CD8-positive, alpha-beta memory T cell (primary cell): ENCODE measurements at regions of chr16 and their contacts with region 1.

Region 1: GRCh38 chr16:31700526-31701388 is 172.8 kb upstream of the ZNF267 start:
- DNase-seq: peak; percentile 81 to 90 (median 86)
- H3K4me3 ChIP-seq: peak overlapping the region; percentile 80
- H3K4me3 Mint-ChIP-seq: peak overlapping the region; percentile 84 to 96 (median 95)
- H3K27ac ChIP-seq: peak overlapping the region; percentile 88
- H3K27ac Mint-ChIP-seq: peak overlapping the region; percentile 92 to 99 (median 94)
- H3K4me1 ChIP-seq: peaks cover 27% of the 10 kb centered on the region
- H3K4me1 Mint-ChIP-seq: peaks cover 23 to 43% (median 33%) of the 10 kb centered on the region in 3 donors
- H3K27me3 ChIP-seq: no peaks in the 10 kb centered on the region
- H3K27me3 Mint-ChIP-seq: no peaks in the 10 kb centered on the region

Region 2: DNA sequence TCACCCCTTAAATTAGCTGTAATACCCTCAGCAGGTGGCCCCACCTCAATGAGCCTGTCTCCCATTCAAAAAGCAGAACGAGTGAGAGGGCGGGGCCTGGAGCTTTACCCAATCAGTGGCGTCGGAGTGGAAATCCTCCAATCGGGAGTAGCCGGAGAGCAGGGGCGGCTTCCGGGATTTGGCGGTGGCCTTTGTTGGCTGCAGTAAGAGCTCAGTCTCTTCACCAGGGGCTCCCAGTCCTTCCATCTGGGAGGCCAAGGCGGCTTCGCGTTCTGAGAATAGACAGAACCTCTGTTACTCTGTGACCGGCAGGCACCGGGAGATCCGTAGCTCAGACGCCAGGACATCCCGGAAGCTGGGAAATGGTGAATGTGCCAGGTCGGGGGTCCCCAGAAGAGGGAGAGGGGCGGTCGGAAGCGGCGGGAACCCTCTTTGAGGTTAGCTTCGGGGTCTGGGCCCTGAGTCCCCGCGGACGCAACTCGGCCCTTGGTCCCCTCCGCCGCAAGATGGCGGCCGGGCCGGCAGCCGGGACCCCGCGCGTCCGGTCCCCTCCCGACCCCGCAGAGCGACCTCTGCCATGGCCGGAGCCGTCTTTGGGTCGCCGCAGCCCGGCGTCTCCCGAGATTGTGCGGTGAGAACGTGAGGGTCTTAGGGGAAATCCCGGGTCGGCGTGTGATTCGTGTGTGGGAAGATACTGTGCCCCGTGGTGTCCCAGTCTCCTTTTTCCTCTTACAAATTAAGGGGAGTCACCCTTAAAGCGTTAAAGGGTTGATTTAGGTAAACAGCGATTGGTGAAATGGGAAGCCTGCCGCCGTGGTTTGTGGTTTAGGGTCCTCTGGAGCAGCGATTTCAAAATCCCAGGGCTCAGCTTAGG is 12.6 kb after region 1 on chr16:
- CTCF ChIA-PET with region 1: interaction called, 10 read pairs
- POLR2A ChIA-PET with region 1: interaction called, 20 read pairs
- DNase-seq: peak; percentile 84 to 93 (median 87)
- H3K4me3 ChIP-seq: peak overlapping the region; percentile 97
- H3K4me3 Mint-ChIP-seq: peak overlapping the region; percentile 98 to 100 (median 100)
- H3K27ac ChIP-seq: peak overlapping the region; percentile 91
- H3K27ac Mint-ChIP-seq: peak overlapping the region; percentile 96 to 100 (median 99)
- H3K4me1 ChIP-seq: peaks cover 35% of the 10 kb centered on the region
- H3K4me1 Mint-ChIP-seq: peaks cover 55 to 71% (median 65%) of the 10 kb centered on the region in 3 donors
- H3K27me3 ChIP-seq: no peaks in the 10 kb centered on the region
- H3K27me3 Mint-ChIP-seq: no peaks in the 10 kb centered on the region